Lower lobe of right lung (tissue), 2 donors: ENCODE measurements at regions of chr11 and their contacts with region 1.

Region 1: DNA sequence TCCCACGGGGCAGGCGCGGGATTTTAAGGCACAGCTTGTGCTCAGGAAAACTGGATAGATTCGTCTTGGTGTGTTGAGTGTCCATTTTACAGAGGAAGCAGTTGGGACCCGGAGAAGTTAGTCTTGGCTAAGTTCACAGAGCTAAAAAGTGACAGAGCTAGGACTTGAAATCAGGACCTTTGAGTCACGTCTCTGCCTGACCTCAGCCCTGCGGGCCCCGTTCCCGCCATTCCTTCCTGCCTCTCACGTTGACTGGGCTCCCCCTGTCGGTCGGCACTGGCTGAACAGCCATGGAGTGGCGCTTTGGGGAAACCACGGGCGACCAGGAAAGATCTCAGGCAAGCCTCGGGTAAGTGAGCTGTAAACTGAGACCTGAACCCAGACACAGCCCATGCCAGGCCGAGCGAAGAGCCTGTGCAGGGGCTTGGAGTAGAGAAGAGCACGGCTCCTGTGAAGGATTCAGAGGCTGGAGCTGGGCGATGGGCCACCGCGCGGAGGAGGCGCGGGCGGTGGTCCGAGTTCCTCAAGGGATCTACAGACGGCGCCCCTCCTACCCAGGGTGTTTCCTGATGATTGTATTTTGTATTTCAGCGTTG is 54.1 kb downstream of the WNT11 start:
- DNase-seq: peak; percentile 91
- ATAC-seq: peak; percentile 93 to 96
- H3K4me3 ChIP-seq: peak overlapping the region; percentile 44
- H3K27ac ChIP-seq: no peak overlapping the region
- H3K4me1 ChIP-seq: peaks cover 12% of the 10 kb centered on the region
- H3K27me3 ChIP-seq: no peaks in the 10 kb centered on the region
- CTCF ChIP-seq: peak; percentile 97

Region 2: GRCh38 chr11:75896843-75897419 is 255.3 kb before region 1 on chr11:
- intact Hi-C with region 1: loop called (anchors 10 kb)
- DNase-seq: no peak
- ATAC-seq: peak; percentile 56
- H3K4me3 ChIP-seq: no peak overlapping the region
- H3K27ac ChIP-seq: no peak overlapping the region
- H3K4me1 ChIP-seq: peaks cover 5% of the 10 kb centered on the region
- H3K27me3 ChIP-seq: no peaks in the 10 kb centered on the region
- CTCF ChIP-seq: peak; percentile 73